ENCODE measurements at regions of chr4 and their contacts with region 1.

Region 1: DNA sequence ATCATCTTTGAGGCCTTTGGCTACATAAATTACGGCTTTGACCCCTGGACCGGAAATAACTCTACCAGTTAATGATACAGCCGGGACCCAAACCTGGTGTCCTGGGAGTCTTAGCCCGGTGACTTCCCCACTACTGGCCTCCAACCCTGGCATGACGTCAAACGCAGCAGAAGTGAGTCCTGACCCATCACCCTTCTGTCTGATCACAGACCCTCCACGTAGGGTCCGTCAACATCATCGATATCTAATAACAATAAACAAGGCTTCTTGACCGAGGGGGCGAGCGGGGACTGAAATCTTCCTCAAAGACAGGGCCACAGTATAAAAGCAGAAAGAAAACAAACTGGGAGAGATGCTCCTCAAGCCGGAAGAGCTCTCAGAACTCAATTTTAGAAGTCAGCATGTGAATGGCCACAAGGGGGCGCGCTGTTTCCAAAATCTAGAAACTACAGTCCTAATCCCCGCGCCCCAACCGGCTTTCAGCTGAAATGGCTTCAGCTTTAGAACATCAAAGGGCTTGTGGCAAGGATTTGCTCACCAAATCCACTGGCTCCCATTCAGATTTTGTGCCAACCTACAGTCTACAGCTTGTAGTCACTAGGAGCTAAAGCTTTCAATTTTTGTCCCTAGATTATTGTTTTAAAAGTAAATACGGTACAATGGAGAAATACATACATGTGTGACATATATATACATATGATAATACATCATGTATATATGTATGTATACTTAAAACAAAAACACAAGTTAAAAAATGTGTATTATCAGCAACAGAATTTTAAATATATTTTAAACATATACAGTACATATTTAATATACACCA is 46.4 kb upstream of the ENPP6 start:
- DNase-seq: peak; percentile 72
- CTCF ChIP-seq: peak; percentile 80

Region 2: DNA sequence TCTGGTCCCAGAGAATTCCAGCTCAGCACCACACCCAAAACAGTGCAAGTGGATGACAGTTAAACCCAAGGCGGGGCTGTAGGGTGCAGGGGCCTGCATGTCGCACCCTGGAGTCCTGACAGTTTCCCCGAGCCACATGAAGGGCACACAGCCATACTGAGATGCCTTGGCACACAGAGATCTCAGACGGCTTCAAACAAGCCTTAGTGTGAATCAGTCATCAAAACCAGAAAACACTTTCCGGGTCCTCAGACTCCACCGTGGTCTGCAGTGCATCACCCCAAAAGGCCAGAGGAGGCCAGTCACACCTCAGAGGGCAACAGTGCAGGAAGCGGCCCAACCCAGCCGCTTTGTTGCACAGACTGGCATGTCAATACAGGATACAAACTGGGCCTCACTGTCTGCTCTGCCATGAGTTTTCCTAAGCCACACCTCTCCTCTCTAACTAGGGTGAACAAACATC is 18.2 kb after region 1 on chr4:
- CTCF ChIA-PET with region 1: interaction called, 168 read pairs
- POLR2A ChIA-PET with region 1: interaction called, 23 read pairs
- DNase-seq: peak; percentile 50
- CTCF ChIP-seq: peak; percentile 39

Region 3: DNA sequence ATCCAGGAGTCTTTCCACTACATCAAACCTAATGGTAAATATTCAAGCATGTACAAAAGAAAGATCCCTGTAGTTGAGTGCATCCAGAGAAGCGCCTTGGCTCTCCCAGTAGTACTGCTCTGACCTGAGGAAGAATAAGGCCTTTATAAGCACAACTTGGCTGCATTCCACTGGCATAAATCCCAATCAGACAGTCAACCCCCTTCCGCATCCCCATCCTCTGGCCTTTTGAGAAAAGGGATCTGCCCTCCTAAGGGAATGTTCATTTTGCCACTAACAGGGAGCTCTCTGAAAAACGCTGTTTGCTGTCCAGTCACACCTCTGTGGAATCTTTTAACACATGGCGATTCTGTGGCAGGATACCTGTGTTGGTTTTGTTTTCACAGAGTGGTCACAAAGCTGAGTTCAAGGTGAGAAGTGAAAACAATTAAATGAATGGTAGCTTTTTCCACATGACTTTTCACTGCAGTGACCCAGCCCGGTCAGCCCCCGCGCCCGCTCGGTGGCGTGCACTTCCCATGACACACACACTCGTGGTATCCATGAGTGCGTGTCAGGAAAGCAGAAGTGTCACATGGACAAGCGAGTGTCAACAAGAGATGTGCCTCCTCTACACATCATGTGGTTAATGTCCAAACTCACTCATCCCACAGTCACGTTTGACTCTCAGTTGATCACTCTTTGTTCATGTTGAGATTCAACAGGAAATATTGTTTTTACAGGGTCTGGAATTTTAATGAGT is 65.7 kb after region 1 on chr4:
- CTCF ChIA-PET with region 1: interaction called, 43 read pairs
- POLR2A ChIA-PET with region 1: interaction called, 8 read pairs
- DNase-seq: peak; percentile 70
- CTCF ChIP-seq: peak; percentile 35

Region 4: DNA sequence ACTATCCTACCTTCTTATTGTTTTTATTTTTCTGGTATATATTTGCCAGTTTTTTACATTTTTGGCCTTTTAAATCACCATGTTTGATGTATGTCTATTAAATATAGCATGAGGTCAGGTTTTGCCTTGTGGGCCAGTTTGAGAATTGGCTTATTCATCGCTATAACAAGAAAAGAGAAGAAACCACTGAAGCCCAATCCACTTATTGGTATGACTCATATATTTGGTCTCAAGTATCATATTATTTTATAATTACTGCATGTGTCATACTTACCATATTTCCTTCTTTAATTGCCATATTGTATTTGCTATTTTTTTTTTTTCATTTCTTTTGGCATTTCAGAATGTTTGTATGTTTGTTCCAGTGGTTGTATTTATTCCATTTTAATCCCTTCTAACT is 110.9 kb after region 1 on chr4:
- CTCF ChIA-PET with region 1: interaction called, 15 read pairs
- POLR2A ChIA-PET with region 1: no interaction called
- DNase-seq: no peak
- CTCF ChIP-seq: no peak

Region 5: GRCh38 chr4:184514121-184514988 is 250.2 kb after region 1 on chr4:
- CTCF ChIA-PET with region 1: interaction called, 13 read pairs
- POLR2A ChIA-PET with region 1: no interaction called
- DNase-seq: peak; percentile 89
- CTCF ChIP-seq: no peak

Region 6: DNA sequence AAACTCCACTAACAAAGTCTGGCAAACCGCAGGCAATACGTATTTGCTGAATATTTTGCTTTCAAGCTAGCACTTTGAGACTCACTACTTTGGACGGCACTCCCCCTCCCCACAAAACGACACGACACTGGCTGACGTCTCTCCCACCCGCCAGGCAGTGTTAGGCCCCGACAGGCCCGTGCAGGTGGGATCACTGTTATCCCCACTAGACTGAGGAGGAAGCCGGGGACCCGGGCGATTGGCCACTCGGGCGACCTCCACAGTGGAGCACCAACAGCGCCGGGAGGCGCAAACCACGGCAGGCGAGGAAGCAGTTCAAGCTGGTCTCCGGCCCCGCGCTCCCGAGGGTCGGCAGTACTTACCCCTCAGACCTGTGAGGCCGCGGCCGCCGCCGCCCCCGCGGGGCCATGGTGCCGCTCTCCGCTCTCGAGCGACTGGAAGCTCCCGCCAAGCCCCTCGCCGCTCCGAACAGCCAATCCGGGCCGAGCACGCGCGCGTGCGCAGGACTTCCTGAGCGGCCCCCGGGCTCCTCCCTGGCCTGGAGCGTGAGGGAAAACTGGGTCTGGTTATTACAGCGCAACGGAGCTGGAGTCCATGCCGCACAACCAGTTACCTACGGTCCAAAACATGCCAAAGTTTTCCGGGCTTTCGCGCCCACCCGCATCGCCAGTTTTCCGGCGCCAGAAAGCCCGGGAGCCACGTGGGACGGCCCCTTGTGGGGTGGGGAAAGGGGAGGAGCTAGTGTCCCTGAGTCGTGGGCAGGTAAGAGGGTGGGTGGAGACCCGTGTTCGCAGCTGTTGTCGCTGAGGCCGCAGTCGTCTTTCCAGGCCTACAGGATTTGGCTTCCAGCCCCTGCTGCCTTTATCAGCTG is 469.8 kb after region 1 on chr4 and contains the start of gene CENPU:
- CTCF ChIA-PET with region 1: interaction called, 11 read pairs
- POLR2A ChIA-PET with region 1: no interaction called
- DNase-seq: peak; percentile 100
- CTCF ChIP-seq: no peak

Measured in GM10248 (cell line).